ENCODE measurements at regions of chr4 and their contacts with region 1.

Region 1: GRCh38 chr4:155371432-155372043 is 5.2 kb downstream of the MAP9 start:
- DNase-seq: no peak
- H3K4me3 Mint-ChIP-seq: no peak overlapping the region
- H3K27ac Mint-ChIP-seq: no peak overlapping the region
- H3K4me1 Mint-ChIP-seq: no peaks in the 10 kb centered on the region
- H3K27me3 Mint-ChIP-seq: no peaks in the 10 kb centered on the region
- CTCF ChIP-seq: no peak

Region 2: GRCh38 chr4:154807042-154807630 is 564.4 kb before region 1 on chr4:
- CTCF ChIA-PET with region 1: no interaction called
- intact Hi-C with region 1: loop called (anchors 5 kb)
- DNase-seq: no peak
- H3K4me3 Mint-ChIP-seq: no peak overlapping the region
- H3K27ac Mint-ChIP-seq: no peak overlapping the region
- H3K4me1 Mint-ChIP-seq: no peaks in the 10 kb centered on the region
- H3K27me3 Mint-ChIP-seq: no peaks in the 10 kb centered on the region
- CTCF ChIP-seq: peak; percentile 48

Region 3: DNA sequence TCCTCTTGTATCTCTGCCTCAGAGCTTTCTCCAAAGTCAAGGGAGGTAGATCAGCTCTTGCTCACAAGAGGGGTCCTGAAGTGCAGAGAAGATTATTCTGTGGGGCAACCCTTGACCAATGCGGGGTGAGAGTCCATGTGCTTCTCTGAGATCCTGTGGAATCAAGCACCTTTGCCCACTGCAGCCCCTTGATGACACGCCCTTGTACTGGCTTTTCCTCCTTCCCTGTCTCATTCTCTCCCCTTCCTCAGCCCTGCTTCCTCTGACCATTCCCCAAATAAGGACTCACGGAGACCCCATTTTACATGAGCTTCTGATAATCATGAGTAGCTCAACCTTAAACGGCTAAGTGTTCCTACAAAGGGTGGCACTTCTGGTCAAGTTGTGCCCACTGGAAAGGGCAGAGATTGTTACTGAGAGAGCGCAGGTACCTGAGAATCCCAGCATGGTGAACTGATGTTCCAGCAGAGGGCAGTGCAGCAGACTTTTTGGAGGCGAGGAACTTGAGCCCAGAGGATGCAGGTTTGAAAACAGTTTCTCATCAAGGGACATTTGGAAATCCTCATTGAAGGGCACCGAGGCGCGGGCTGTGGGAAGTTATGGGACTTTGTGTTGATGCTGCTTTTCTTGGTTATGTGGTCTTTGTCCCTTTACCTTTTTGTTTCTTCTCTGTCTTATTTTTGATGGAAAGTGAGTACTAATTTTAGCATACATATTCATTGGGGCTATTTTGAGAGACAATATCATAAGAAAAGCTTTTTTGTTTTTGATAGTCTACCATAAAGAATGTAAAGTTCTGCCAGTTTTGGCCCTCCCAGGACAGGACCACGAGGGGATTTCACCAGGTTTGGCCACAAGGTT is 389.1 kb before region 1 on chr4:
- CTCF ChIA-PET with region 1: no interaction called
- intact Hi-C with region 1: loop called (anchors 2 kb)
- DNase-seq: peak; percentile 50
- H3K4me3 Mint-ChIP-seq: no peak overlapping the region
- H3K27ac Mint-ChIP-seq: no peak overlapping the region
- H3K4me1 Mint-ChIP-seq: no peaks in the 10 kb centered on the region
- H3K27me3 Mint-ChIP-seq: no peaks in the 10 kb centered on the region
- CTCF ChIP-seq: peak; percentile 36

Region 4: GRCh38 chr4:155268821-155269220 is 102.7 kb before region 1 on chr4:
- CTCF ChIA-PET with region 1: no interaction called
- intact Hi-C with region 1: no loop called
- DNase-seq: no peak
- H3K4me3 Mint-ChIP-seq: no peak overlapping the region
- H3K27ac Mint-ChIP-seq: no peak overlapping the region
- H3K4me1 Mint-ChIP-seq: no peaks in the 10 kb centered on the region
- H3K27me3 Mint-ChIP-seq: no peaks in the 10 kb centered on the region
- CTCF ChIP-seq: no peak